ENCODE measurements at regions of chr5 and their contacts with region 1.

Region 1: GRCh38 chr5:10689391-10690081 is 71.5 kb downstream of the DAP start:
- DNase-seq: no peak
- H3K4me3 ChIP-seq: no peak overlapping the region
- CTCF ChIP-seq: peak; percentile 24

Region 2: GRCh38 chr5:10577371-10578292 is 111.9 kb before region 1 on chr5:
- CTCF ChIA-PET with region 1: no interaction called
- POLR2A ChIA-PET with region 1: no interaction called
- DNase-seq: no peak
- H3K4me3 ChIP-seq: no peak overlapping the region
- CTCF ChIP-seq: no peak

Region 3: DNA sequence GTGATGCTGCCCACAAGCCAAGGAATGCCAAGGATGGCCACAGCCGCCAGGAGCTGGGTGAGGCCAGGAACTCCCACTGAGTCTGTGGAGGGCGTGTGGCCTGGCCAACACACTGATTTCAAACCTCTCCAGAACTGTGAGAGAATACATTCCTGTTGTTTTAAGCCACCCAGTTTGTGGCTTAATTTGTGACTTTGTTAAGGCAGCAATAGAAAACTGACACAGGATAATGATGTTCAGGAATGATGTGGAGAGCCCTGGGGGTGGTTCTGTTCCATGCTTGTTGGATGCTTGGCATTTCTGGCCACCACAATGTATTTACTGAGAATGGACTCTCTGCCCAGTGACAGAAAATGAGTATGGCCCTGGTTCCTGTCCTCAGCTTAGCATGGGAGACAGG is 11.3 kb before region 1 on chr5:
- CTCF ChIA-PET with region 1: interaction called, 13 read pairs
- POLR2A ChIA-PET with region 1: no interaction called
- DNase-seq: peak; percentile 63
- H3K4me3 ChIP-seq: no peak overlapping the region
- CTCF ChIP-seq: no peak

Region 4: GRCh38 chr5:11234501-11234911 is 545.0 kb after region 1 on chr5:
- CTCF ChIA-PET with region 1: no interaction called
- POLR2A ChIA-PET with region 1: no interaction called
- DNase-seq: no peak
- H3K4me3 ChIP-seq: no peak overlapping the region
- CTCF ChIP-seq: no peak

Measured in AG04449 (cell line).